Ascending aorta (tissue), 2 donors: ENCODE measurements at regions of chr20 and their contacts with region 1.

Region 1: DNA sequence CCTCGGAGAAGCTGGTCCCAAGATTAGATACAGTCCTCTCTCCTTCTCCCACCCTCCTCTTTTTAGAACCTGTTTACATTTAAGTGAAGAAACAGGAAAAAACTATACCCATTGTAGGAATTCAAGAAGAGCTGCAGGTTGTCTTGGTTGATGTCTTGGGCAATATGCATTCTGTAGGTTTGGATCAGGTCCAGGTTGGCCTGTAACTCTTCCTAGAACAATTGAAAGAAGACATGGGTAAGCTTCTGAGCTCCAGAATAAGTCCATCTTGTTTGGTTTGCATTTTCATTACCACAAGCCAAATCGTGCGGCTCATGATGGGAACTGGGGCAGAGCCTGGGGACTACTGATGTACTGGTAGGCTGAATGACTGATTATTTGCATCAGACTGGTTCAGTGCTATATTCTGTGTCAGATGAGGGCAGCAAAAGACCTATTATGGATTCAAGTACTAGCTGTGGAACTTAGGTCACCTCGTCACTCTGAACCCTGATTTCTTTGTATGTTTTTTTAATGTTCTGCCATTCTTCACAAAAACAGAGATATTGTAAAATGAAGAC is 20.3 kb upstream of the SLA2 start:
- DNase-seq: no peak
- H3K4me3 ChIP-seq: no peak overlapping the region
- H3K27ac ChIP-seq: no peak overlapping the region
- H3K4me1 ChIP-seq: no peaks in the 10 kb centered on the region
- H3K27me3 ChIP-seq: no peaks in the 10 kb centered on the region
- CTCF ChIP-seq: peak; percentile 23 to 45 (median 41)

Region 2: DNA sequence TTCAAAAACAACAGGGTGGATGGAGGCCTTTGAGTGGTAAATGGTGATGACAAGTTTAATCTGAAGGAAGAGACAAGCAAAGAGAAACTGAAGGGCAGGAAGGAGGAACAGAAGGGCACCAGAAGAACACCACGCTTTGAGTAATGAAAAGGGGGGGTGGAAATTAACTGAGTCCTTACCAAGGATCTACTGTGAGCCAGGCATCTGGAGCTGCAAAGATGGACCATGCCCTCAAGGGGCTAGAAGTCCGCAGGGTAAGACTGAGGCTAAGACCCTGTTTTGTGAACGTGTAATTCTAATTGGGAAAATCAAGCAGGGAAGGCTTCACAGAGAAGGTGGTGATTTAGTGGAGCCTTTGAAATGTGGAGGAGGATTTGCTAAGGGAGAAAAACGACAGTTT is 78.0 kb after region 1 on chr20:
- intact Hi-C with region 1: no loop called
- DNase-seq: no peak
- H3K4me3 ChIP-seq: peak overlapping the region; percentile 97 to 100
- H3K27ac ChIP-seq: peak overlapping the region; percentile 84 to 89
- H3K4me1 ChIP-seq: peaks cover 3 to 14% of the 10 kb centered on the region in 2 donors
- H3K27me3 ChIP-seq: no peaks in the 10 kb centered on the region
- CTCF ChIP-seq: no peak

Region 3: DNA sequence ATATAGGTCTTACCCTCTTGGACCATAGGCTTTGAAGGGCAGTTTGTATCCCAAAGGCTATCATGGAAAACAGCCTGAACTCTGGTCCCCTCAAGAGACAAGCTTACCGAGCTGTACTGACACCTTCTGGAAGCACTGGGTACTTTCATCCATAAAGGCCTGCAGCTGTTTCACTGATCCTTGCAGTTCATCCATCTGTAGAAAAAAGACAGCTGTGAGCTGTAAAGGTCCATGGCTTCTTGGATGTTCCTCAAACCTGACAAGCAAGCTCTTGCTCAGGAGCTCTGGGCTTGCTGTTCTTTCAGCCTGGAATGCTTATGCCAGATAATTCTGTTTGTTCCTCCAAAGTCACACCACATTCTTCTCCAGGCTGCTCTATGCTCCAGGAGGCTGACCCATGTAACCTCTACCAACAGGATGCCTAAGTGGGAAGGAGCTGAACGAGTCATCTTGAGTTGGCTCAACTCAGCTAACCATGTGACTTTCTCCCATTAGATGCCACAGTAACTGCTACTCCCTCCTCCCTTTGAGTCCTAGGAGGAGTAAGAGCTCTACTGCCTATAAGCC is 88.5 kb after region 1 on chr20:
- intact Hi-C with region 1: loop called (anchors 1 kb)
- DNase-seq: peak in 1 of 2 donors; percentile 67
- H3K4me3 ChIP-seq: no peak overlapping the region
- H3K27ac ChIP-seq: no peak overlapping the region
- H3K4me1 ChIP-seq: no peaks in the 10 kb centered on the region
- H3K27me3 ChIP-seq: no peaks in the 10 kb centered on the region
- CTCF ChIP-seq: peak; percentile 81 to 87 (median 84)

Region 4: GRCh38 chr20:36917943-36918342 is 251.7 kb after region 1 on chr20:
- intact Hi-C with region 1: no loop called
- DNase-seq: no peak
- H3K4me3 ChIP-seq: no peak overlapping the region
- H3K27ac ChIP-seq: no peak overlapping the region
- H3K4me1 ChIP-seq: no peaks in the 10 kb centered on the region
- H3K27me3 ChIP-seq: no peaks in the 10 kb centered on the region
- CTCF ChIP-seq: no peak